ENCODE measurements at regions of chr14 and their contacts with region 1.

Region 1: GRCh38 chr14:26598081-26598795 is 405 bp upstream of the NOVA1 start:
- DNase-seq: peak; percentile 92
- H3K4me3 ChIP-seq: peak overlapping the region; percentile 55 to 98 (median 98)
- H3K27ac ChIP-seq: no peak overlapping the region
- H3K4me1 ChIP-seq: peaks cover 5% of the 10 kb centered on the region
- H3K27me3 ChIP-seq: peaks cover 8 to 18% of the 10 kb centered on the region in 2 experiments
- CTCF ChIP-seq: no peak
- POLR2A ChIP-seq: no peak

Region 2: DNA sequence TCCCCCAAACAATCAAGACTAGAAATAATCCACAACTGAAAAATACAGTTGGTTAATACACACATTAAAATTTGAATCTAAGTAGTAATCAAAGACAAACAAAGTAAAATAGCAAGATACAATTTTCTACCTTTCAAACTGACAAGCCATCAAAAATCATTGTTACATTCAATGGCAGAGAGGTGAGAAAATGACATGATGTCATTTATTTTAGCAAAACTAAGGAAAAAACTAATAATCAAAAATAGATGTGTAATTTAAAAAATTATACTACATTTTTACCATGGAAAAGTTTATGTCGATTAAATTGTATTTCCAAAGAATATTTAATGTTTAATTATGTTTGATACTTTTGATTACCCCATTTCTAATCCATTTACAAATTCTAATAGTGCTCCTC is 60.1 kb before region 1 on chr14:
- CTCF ChIA-PET with region 1: no interaction called
- POLR2A ChIA-PET with region 1: no interaction called
- dilution Hi-C with region 1: no loop called
- intact Hi-C with region 1: no loop called
- DNase-seq: no peak
- H3K4me3 ChIP-seq: no peak overlapping the region
- H3K27ac ChIP-seq: no peak overlapping the region
- H3K4me1 ChIP-seq: no peaks in the 10 kb centered on the region
- H3K27me3 ChIP-seq: no peaks in the 10 kb centered on the region
- CTCF ChIP-seq: no peak
- POLR2A ChIP-seq: no peak

Region 3: GRCh38 chr14:26709019-26709418 is 110.8 kb after region 1 on chr14:
- CTCF ChIA-PET with region 1: interaction called, 4 read pairs
- POLR2A ChIA-PET with region 1: no interaction called
- dilution Hi-C with region 1: no loop called
- intact Hi-C with region 1: loop called (anchors 2 kb)
- DNase-seq: peak; percentile 84
- H3K4me3 ChIP-seq: no peak overlapping the region
- H3K27ac ChIP-seq: peak overlapping the region; percentile 12
- H3K4me1 ChIP-seq: peaks cover 15% of the 10 kb centered on the region
- H3K27me3 ChIP-seq: no peaks in the 10 kb centered on the region
- CTCF ChIP-seq: no peak
- POLR2A ChIP-seq: peak; percentile 37

Region 4: DNA sequence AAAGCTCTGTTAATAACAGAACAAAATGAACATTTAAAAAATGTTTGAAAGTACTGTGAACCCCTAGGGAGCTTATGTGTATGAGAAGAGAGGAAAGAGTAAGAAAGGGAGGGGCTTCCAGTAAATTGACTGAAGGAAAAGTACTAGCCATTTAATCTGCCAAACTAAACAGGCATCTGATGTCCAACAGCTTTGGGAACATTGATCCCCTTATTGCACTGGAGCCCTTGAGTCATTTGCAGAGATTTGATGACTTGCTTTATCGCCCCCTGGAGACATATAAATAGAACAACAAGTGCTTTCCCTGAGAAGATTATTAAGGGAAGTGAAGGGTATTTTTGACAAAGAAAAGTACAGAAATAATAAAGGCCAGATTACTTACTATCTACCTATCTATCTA is 318.8 kb after region 1 on chr14:
- CTCF ChIA-PET with region 1: interaction called, 5 read pairs
- POLR2A ChIA-PET with region 1: no interaction called
- dilution Hi-C with region 1: no loop called
- intact Hi-C with region 1: loop called (anchors 5 kb)
- DNase-seq: peak; percentile 28
- H3K4me3 ChIP-seq: no peak overlapping the region
- H3K27ac ChIP-seq: no peak overlapping the region
- H3K4me1 ChIP-seq: no peaks in the 10 kb centered on the region
- H3K27me3 ChIP-seq: peaks cover 0 to 1% of the 10 kb centered on the region in 2 experiments
- CTCF ChIP-seq: peak; percentile 30 to 48
- POLR2A ChIP-seq: no peak

Region 5: GRCh38 chr14:27528328-27528727 is 930.1 kb after region 1 on chr14:
- CTCF ChIA-PET with region 1: no interaction called
- POLR2A ChIA-PET with region 1: no interaction called
- dilution Hi-C with region 1: no loop called
- intact Hi-C with region 1: loop called (anchors 10 kb)
- DNase-seq: peak; percentile 50
- H3K4me3 ChIP-seq: no peak overlapping the region
- H3K27ac ChIP-seq: no peak overlapping the region
- H3K4me1 ChIP-seq: no peaks in the 10 kb centered on the region
- H3K27me3 ChIP-seq: no peaks in the 10 kb centered on the region
- CTCF ChIP-seq: peak; percentile 32 to 51
- POLR2A ChIP-seq: no peak